Naive thymus-derived CD4-positive, alpha-beta T cell (primary cell): ENCODE measurements at regions of chr5 and their contacts with region 1.

Region 1: GRCh38 chr5:169152946-169153345 is 148.0 kb downstream of the SLIT3 start:
- DNase-seq: no peak
- ATAC-seq: no peak
- H3K4me3 ChIP-seq: no peak overlapping the region
- H3K4me3 Mint-ChIP-seq: no peak overlapping the region
- H3K27ac ChIP-seq: no peak overlapping the region
- H3K27ac Mint-ChIP-seq: no peak overlapping the region
- H3K4me1 ChIP-seq: no peaks in the 10 kb centered on the region
- H3K4me1 Mint-ChIP-seq: no peaks in the 10 kb centered on the region
- H3K27me3 ChIP-seq: no peaks in the 10 kb centered on the region
- H3K27me3 Mint-ChIP-seq: peaks cover 0 to 18% (median 5%) of the 10 kb centered on the region in 5 donors

Region 2: GRCh38 chr5:169183576-169183975 is 30.6 kb after region 1 on chr5:
- CTCF ChIA-PET with region 1: no interaction called
- POLR2A ChIA-PET with region 1: no interaction called
- intact Hi-C with region 1: loop called in 1 of 2 experiments (anchors 1 kb)
- DNase-seq: no peak
- ATAC-seq: no peak
- H3K4me3 ChIP-seq: no peak overlapping the region
- H3K4me3 Mint-ChIP-seq: no peak overlapping the region
- H3K27ac ChIP-seq: no peak overlapping the region
- H3K27ac Mint-ChIP-seq: no peak overlapping the region
- H3K4me1 ChIP-seq: no peaks in the 10 kb centered on the region
- H3K4me1 Mint-ChIP-seq: no peaks in the 10 kb centered on the region
- H3K27me3 ChIP-seq: no peaks in the 10 kb centered on the region
- H3K27me3 Mint-ChIP-seq: peaks cover 0 to 3% (median 0%) of the 10 kb centered on the region in 5 donors